ENCODE measurements at regions of chr7 and their contacts with region 1.

Region 1: GRCh38 chr7:140175221-140176121 is 1.3 kb downstream of the KDM7A start:
- DNase-seq: peak; percentile 84
- ATAC-seq: peak; percentile 59
- H3K4me3 ChIP-seq: peak overlapping the region; percentile 78
- H3K27ac ChIP-seq: peak overlapping the region; percentile 13; the same call in 1 of the 2 replicates
- H3K4me1 ChIP-seq: peaks cover 5% of the 10 kb centered on the region; the same call in 1 of the 2 replicates
- H3K27me3 ChIP-seq: no peaks in the 10 kb centered on the region
- CTCF ChIP-seq: peak; percentile 89

Region 2: GRCh38 chr7:139777948-139778841 is 397.3 kb before region 1 on chr7 and contains the start of gene HIPK2:
- CTCF ChIA-PET with region 1: no interaction called
- POLR2A ChIA-PET with region 1: no interaction called
- intact Hi-C with region 1: loop called (anchors 5 kb)
- DNase-seq: peak; percentile 81
- ATAC-seq: peak; percentile 48
- H3K4me3 ChIP-seq: peak within 1 kb of the TSS; percentile 84
- H3K27ac ChIP-seq: peak within 1 kb of the TSS; percentile 99
- H3K4me1 ChIP-seq: peaks cover 46% of the 10 kb centered on the region
- H3K27me3 ChIP-seq: no peaks in the 10 kb centered on the region
- CTCF ChIP-seq: no peak
- total RNA-seq, gene HIPK2: 38.1 and 46.0 TPM in 2 replicates

Region 3: DNA sequence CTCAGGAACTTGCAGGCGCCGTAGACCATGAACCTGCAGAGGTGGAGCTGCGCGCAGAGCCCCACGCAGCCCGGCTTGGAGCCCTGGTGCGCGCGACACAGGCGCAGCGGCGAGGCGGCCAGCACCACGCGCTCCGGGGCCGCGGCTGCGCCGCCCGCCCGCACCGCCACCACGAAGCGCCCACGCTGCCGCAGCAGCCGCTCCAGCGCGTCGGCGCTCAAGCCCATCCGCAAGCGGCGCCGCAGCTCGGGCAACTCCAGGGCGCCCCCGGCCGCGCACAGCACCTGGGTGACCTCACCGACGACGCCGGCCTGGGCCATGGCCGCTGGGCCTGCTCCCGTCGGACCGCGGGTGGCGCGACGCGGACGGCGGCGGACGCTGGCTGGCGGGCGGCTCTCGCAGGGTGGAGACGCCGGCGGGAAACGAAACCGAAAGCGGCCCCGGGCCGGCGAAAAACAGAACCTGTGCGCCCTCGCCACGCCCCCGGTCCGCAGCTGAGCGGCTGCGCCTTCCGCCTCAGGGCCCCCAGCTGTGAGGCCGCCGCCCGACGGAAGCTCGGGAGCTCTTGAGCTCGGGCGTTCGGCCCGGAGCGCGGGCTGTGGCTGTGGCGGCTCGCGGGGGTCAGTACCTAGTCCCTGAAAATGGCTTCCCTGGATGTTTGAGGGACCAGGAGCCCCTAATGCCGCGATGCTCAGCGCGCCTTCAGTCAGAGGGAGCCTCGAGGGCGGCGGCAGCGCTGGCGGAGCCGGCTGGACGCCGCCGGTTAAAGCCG is 112.8 kb before region 1 on chr7 and contains the start of gene PARP12:
- CTCF ChIA-PET with region 1: interaction called, 6 read pairs
- POLR2A ChIA-PET with region 1: no interaction called
- intact Hi-C with region 1: loop called (anchors 2 kb)
- DNase-seq: peak; percentile 70
- ATAC-seq: peak; percentile 50
- H3K4me3 ChIP-seq: peak within 1 kb of the TSS; percentile 80
- H3K27ac ChIP-seq: peak within 1 kb of the TSS; percentile 95
- H3K4me1 ChIP-seq: peaks cover 41% of the 10 kb centered on the region
- H3K27me3 ChIP-seq: no peaks in the 10 kb centered on the region
- CTCF ChIP-seq: no peak
- total RNA-seq, gene PARP12: 25.5 and 28.1 TPM in 2 replicates

Region 4: GRCh38 chr7:140230861-140231770 is 55.6 kb after region 1 on chr7:
- CTCF ChIA-PET with region 1: no interaction called
- POLR2A ChIA-PET with region 1: no interaction called
- intact Hi-C with region 1: loop called (anchors 5 kb)
- DNase-seq: peak; percentile 63
- ATAC-seq: peak; percentile 77
- H3K4me3 ChIP-seq: peak overlapping the region; percentile 72
- H3K27ac ChIP-seq: peak overlapping the region; percentile 10
- H3K4me1 ChIP-seq: peaks cover 9% of the 10 kb centered on the region
- H3K27me3 ChIP-seq: no peaks in the 10 kb centered on the region
- CTCF ChIP-seq: peak; percentile 19; the same call in 1 of the 2 replicates

Region 5: GRCh38 chr7:140326116-140326928 is 150.9 kb after region 1 on chr7:
- CTCF ChIA-PET with region 1: interaction called, 3 read pairs
- POLR2A ChIA-PET with region 1: interaction called, 3 read pairs
- intact Hi-C with region 1: loop called (anchors 1 kb)
- DNase-seq: peak; percentile 65
- ATAC-seq: peak; percentile 96
- H3K4me3 ChIP-seq: no peak overlapping the region
- H3K27ac ChIP-seq: no peak overlapping the region
- H3K4me1 ChIP-seq: no peaks in the 10 kb centered on the region
- H3K27me3 ChIP-seq: no peaks in the 10 kb centered on the region
- CTCF ChIP-seq: peak; percentile 86

Region 6: GRCh38 chr7:140390466-140391190 is 215.2 kb after region 1 on chr7:
- CTCF ChIA-PET with region 1: no interaction called
- POLR2A ChIA-PET with region 1: no interaction called
- intact Hi-C with region 1: no loop called
- DNase-seq: no peak
- ATAC-seq: no peak
- H3K4me3 ChIP-seq: no peak overlapping the region
- H3K27ac ChIP-seq: no peak overlapping the region
- H3K4me1 ChIP-seq: no peaks in the 10 kb centered on the region; the same call in 1 of the 2 replicates
- H3K27me3 ChIP-seq: no peaks in the 10 kb centered on the region
- CTCF ChIP-seq: no peak

Region 7: DNA sequence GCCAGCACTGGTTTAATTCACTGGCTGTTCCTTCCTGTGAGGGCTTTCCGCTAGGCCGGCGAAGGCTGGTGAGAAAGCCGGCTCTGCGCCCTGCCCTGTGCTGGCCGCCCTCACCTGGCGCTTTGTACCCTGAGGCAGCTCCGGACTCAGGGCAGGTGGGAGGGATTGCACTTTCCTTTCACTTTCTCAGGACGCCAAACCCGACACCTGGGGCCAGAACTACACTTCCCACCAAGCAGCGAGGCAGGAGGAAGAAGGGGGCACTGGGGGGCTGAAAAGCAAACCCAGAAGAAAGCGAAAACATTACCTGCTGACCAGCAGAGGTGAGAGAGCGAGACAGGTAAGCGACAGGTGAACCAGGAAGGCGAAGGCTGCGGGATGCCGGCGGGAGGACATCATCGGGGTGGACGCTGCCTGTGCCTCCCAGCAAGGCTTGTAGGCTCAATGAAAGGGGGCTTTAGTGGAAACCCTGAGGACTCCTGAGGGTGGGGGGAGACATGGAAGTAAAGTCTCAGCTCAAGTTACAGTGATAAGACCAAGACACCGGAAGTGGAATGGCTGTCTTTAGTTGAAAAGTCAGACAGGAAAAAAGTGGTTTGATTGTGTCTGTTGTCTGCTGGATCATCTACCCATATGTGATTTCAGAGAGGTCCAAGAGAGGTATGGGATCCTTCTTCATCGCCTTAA is 228.6 kb after region 1 on chr7 and contains the start of gene RAB19:
- CTCF ChIA-PET with region 1: no interaction called
- POLR2A ChIA-PET with region 1: no interaction called
- intact Hi-C with region 1: loop called (anchors 1 kb)
- DNase-seq: peak; percentile 53
- ATAC-seq: peak; percentile 77
- H3K4me3 ChIP-seq: peak within 1 kb of the TSS; percentile 91
- H3K27ac ChIP-seq: no peak within 1 kb of the TSS
- H3K4me1 ChIP-seq: peaks cover 15% of the 10 kb centered on the region
- H3K27me3 ChIP-seq: no peaks in the 10 kb centered on the region
- CTCF ChIP-seq: no peak
- total RNA-seq, gene RAB19: 0.52 and 1.3 TPM in 2 replicates

Measured in PC-3 (cell line).